Right cardiac atrium (tissue), 5 donors: ENCODE measurements at regions of chr3 and their contacts with region 1.

Region 1: DNA sequence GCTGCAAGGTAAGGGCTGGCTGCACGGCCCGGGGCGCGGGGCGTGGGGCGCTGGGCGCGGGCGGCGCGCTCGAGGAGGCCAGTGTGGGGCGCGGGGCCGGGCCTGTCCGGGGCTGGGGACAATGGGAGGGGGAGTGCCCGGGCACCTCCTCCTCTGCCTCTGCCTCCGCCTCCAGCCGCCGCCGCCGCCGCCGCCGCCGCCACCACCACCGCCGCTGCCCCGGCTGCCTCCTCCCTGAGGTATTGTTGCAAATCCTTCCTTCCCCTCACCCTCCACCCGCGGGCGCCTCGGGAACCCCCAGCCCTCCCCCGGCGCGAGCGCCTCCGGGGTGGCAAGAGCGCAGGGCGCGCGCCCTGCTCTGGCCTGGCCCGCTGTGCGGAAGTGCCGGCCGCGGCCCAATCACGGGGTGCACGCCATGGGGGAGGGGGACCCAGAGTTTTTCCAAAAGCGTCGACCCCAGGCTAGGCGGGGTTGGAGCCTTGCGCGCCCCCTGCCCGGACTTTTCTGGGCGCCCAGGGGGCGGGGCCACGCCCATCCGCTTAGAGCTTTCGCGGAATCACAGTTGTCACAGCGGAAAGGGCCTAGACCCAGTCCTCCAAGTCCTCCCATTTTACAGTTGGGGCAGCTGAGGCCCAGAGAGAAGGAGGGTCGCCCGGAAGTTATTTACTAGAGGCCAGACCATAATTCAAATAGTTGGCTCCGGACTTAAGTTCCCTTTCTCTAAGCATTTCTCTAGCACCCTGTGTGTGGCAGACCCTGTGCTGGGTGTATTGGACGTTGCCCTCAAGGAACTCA is at the start of gene LPP:
- DNase-seq: peak; percentile 80 to 93 (median 92)
- ATAC-seq: peak; percentile 93
- H3K4me3 ChIP-seq: peak within 1 kb of the TSS; percentile 82
- H3K27ac ChIP-seq: peak within 1 kb of the TSS; percentile 80
- H3K4me1 ChIP-seq: peaks cover 23% of the 10 kb centered on the region
- H3K27me3 ChIP-seq: no peaks in the 10 kb centered on the region
- total RNA-seq, gene LPP: 141 to 205 (median 171) TPM

Region 2: GRCh38 chr3:188052169-188053030 is 101.8 kb before region 1 on chr3:
- intact Hi-C with region 1: loop called in 1 of 4 experiments (anchors 10 kb)
- DNase-seq: peak; percentile 92 to 96 (median 95)
- ATAC-seq: peak; percentile 97 to 99
- H3K4me3 ChIP-seq: no peak overlapping the region
- H3K27ac ChIP-seq: peak overlapping the region; percentile 94
- H3K4me1 ChIP-seq: peaks cover 3% of the 10 kb centered on the region
- H3K27me3 ChIP-seq: no peaks in the 10 kb centered on the region

Region 3: DNA sequence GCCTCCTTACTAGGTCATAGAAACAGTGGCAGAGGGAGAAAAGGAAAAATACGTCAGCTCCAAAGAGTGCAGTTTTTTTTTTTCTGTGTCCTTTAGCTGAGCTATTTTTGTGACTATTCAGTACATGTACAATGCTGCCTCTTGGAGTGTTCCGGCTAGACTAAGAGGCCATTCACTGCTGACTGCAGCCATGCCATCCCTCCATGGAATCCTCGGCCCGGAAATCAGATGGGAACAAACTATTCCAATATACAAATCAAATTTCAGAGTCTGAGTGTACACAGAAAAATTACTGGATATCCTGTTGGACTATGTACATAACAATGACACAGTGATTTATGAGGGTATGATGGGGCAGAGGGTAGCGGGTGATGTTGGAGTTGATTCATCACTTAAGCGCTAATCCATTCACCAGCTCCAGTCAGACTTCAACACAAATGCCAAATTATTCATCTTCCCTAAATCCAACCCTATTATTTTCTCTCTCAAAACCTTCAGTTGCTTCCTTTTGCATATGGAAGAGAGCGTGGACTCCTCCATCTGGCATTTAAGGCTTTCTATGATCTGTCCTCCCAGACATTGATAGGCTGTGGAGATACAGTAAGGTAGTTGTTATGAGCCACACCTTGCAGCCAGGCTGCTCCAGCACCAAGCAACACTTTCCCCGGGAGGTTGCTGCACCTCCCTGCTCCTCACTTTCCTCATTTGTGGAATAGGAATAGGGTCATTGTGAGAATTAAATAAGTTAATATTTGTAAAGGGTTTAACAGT is 108.9 kb after region 1 on chr3:
- intact Hi-C with region 1: loop called in 1 of 4 experiments (anchors 10 kb)
- DNase-seq: peak in 2 of 3 donors; percentile 33 to 59
- ATAC-seq: peak; percentile 73 to 78
- H3K4me3 ChIP-seq: no peak overlapping the region
- H3K27ac ChIP-seq: peak overlapping the region; percentile 93
- H3K4me1 ChIP-seq: peaks cover 27% of the 10 kb centered on the region
- H3K27me3 ChIP-seq: no peaks in the 10 kb centered on the region